ENCODE measurements at regions of chr19 and their contacts with region 1.

Region 1: DNA sequence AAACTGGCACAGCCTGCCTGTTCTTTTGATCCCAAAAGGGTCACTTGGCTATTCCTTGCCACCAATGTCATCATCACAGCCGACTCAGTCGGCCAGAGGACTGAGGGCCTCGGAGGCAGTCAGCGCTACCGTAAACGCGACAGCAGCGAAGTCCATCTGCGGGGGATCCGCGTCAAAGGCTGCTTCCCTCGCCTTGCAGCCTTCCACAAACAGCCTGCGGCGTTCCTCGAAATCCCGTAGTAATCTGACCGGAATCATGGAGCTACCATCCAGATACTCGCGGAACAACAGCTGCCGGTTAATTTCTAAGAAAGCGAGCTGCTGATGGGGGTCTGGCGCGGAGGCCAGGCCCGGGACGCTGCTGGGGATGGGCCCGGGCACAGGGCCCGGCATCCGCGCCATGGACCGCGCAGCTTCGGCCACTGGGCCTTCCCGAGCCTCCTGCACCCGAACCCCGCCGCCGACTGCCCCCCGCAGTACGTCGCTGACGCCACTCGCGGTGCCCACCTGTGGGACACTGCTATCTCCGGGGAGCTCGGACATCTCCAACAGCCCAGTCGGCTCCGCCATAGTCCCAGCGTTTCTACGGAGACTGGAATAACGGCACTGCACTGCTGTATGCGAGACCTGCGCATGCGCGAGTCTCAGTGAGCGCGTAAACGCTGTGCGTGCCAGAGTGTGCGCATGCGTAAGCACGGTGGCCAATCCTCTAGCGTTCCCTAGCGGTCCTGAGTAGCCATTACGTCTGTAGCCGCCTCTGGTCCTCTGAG is at the start of gene EID2B:
- DNase-seq: peak; percentile 92 to 96
- ATAC-seq: peak; percentile 98
- total RNA-seq, gene EID2B: 0.15 to 0.75 TPM

Region 2: GRCh38 chr19:39110263-39110967 is 422.0 kb before region 1 on chr19:
- intact Hi-C with region 1: no loop called
- DNase-seq: peak in 1 of 2 donors; percentile 70
- ATAC-seq: peak; percentile 80

Region 3: GRCh38 chr19:39445265-39446111 is 86.9 kb before region 1 on chr19 and contains the start of gene SUPT5H:
- intact Hi-C with region 1: loop called in 1 of 2 experiments (anchors 10 kb)
- DNase-seq: peak; percentile 98
- ATAC-seq: peak; percentile 96
- total RNA-seq, gene SUPT5H: 89.1 to 101 TPM

Region 4: DNA sequence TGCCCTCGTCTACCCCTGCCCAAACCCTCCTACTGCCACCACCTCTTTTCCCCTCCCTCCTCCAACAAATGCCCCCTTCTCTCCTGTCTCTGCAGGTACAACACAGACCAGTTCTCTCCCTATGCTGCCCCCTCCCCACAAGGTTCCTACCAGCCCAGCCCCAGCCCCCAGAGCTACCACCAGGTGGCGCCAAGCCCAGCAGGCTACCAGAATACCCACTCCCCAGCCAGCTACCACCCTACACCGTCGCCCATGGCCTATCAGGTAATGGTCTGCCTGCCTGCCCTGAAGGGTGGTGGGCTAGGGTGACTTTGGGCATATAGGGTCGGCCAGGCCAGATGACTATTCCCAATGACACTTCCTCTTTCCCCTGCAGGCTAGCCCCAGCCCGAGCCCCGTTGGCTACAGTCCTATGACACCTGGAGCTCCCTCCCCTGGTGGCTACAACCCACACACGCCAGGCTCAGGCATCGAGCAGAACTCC is 58.2 kb before region 1 on chr19:
- intact Hi-C with region 1: loop called in 1 of 2 experiments (anchors 10 kb)
- DNase-seq: peak in 1 of 2 donors; percentile 65
- ATAC-seq: peak; percentile 62

Region 5: DNA sequence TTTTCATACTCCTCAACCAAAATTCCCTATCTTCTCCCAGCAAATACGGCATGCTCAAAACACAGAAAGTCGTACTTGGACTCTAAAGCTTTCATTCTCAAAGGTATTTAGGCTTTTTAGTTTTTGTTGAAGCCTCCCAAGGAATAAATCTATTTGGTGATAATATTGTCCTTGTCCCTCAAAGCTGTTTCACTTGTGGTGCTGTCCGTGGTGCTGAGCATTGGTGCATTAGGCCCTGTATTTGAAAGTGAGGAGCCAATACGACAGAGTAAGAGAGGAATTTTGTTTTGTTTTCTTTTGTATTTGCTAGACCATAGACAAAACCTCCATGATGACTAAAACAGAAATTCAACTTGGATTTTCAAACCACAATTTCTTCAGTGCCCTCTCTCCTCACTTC is 66.7 kb after region 1 on chr19:
- intact Hi-C with region 1: no loop called
- DNase-seq: peak in 1 of 2 donors; percentile 15
- ATAC-seq: no peak